A673 (cell line): ENCODE measurements at regions of chr1 and their contacts with region 1.

Region 1: GRCh38 chr1:38818175-38818976 is 41.2 kb downstream of the RRAGC start:
- DNase-seq: peak; percentile 75
- H3K4me3 ChIP-seq: peak overlapping the region; percentile 60
- H3K27ac ChIP-seq: peak overlapping the region; percentile 63
- H3K4me1 ChIP-seq: peaks cover 6% of the 10 kb centered on the region
- H3K27me3 ChIP-seq: no peaks in the 10 kb centered on the region
- CTCF ChIP-seq: no peak; the same call in none of the 2 replicates

Region 2: GRCh38 chr1:38489844-38490270 is 328.5 kb before region 1 on chr1:
- CTCF ChIA-PET with region 1: no interaction called
- POLR2A ChIA-PET with region 1: no interaction called
- intact Hi-C with region 1: loop called (anchors 2 kb)
- DNase-seq: peak; percentile 64
- H3K4me3 ChIP-seq: no peak overlapping the region
- H3K27ac ChIP-seq: peak overlapping the region; percentile 17
- H3K4me1 ChIP-seq: peaks cover 31% of the 10 kb centered on the region
- H3K27me3 ChIP-seq: no peaks in the 10 kb centered on the region
- CTCF ChIP-seq: peak; percentile 77

Region 3: DNA sequence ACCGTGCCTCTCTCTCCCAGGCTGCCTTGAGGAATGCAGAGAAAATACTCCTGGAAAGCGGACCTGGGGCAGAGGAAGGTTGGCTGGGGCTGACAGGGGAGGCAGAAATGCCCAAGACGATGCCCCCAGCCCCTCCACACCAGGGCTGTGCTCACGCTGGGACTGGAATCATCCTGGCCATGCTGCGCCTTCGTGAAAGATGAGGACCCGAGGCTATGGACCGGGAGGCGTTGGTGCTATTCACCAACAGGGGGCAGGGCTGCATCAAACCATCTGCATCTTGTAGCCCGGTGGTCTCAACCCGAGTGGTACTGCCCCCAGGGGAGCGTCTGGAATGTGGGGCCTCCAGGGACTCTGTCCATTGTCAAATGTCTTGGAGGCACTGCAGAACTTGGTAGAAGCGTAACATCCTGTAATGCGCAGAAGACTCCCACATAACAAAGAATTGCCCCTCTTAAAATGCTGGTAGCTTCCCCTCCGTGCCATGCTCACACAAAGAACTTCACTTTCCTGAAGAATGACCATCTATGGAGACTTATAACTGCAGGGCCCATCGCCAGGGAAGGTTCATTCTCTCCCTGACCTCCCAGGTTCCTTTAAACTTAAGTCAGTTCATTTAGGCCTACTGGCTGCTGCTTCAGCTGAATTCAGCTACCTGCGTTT is 210.0 kb before region 1 on chr1:
- CTCF ChIA-PET with region 1: interaction called, 5 read pairs
- POLR2A ChIA-PET with region 1: no interaction called
- intact Hi-C with region 1: loop called (anchors 1 kb)
- DNase-seq: peak; percentile 91
- H3K4me3 ChIP-seq: no peak overlapping the region
- H3K27ac ChIP-seq: no peak overlapping the region
- H3K4me1 ChIP-seq: peaks cover 17% of the 10 kb centered on the region
- H3K27me3 ChIP-seq: no peaks in the 10 kb centered on the region
- CTCF ChIP-seq: peak; percentile 92